ENCODE measurements at regions of chr9 and their contacts with region 1.

Region 1: DNA sequence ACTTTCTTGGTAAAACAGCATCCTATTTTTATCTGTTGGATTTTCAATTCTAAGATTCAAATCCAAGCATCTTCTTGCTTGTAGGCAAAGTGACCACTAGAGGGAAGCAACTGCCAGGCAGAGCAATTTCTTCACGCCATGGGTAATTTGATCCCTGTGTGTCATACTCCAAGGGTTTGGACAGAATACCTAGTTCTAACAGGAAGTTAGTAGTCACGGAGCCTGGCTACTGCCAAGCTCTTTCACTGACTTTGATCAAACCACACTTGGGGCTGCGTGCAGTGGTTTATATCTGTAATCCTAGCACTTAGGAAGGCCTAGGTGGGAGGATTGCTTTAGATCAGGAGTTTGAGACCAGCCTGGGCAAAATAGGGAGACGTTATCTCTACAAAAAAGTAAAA is 473.6 kb upstream of the TNC start:
- DNase-seq: peak; percentile 98
- H3K4me3 Mint-ChIP-seq: no peak overlapping the region
- H3K27ac Mint-ChIP-seq: peak overlapping the region; percentile 94
- H3K4me1 Mint-ChIP-seq: peaks cover 45% of the 10 kb centered on the region
- H3K27me3 Mint-ChIP-seq: no peaks in the 10 kb centered on the region
- CTCF ChIP-seq: peak; percentile 82

Region 2: GRCh38 chr9:115615821-115616665 is 24.5 kb after region 1 on chr9:
- CTCF ChIA-PET with region 1: interaction called, 26 read pairs
- POLR2A ChIA-PET with region 1: interaction called, 4 read pairs
- intact Hi-C with region 1: no loop called
- DNase-seq: peak; percentile 79
- H3K4me3 Mint-ChIP-seq: no peak overlapping the region
- H3K27ac Mint-ChIP-seq: peak overlapping the region; percentile 61
- H3K4me1 Mint-ChIP-seq: peaks cover 25% of the 10 kb centered on the region
- H3K27me3 Mint-ChIP-seq: no peaks in the 10 kb centered on the region
- CTCF ChIP-seq: no peak

Region 3: GRCh38 chr9:115694014-115694413 is 102.4 kb after region 1 on chr9:
- CTCF ChIA-PET with region 1: interaction called, 62 read pairs
- POLR2A ChIA-PET with region 1: interaction called, 3 read pairs
- intact Hi-C with region 1: loop called (anchors 1 kb)
- DNase-seq: peak; percentile 95
- H3K4me3 Mint-ChIP-seq: no peak overlapping the region
- H3K27ac Mint-ChIP-seq: peak overlapping the region; percentile 44
- H3K4me1 Mint-ChIP-seq: peaks cover 32% of the 10 kb centered on the region
- H3K27me3 Mint-ChIP-seq: no peaks in the 10 kb centered on the region
- CTCF ChIP-seq: peak; percentile 51

Region 4: GRCh38 chr9:115944166-115944948 is 352.8 kb after region 1 on chr9:
- CTCF ChIA-PET with region 1: interaction called, 8 read pairs
- POLR2A ChIA-PET with region 1: no interaction called
- intact Hi-C with region 1: loop called (anchors 2 kb)
- DNase-seq: peak; percentile 99
- H3K4me3 Mint-ChIP-seq: peak overlapping the region; percentile 60
- H3K27ac Mint-ChIP-seq: peak overlapping the region; percentile 100
- H3K4me1 Mint-ChIP-seq: peaks cover 71% of the 10 kb centered on the region
- H3K27me3 Mint-ChIP-seq: no peaks in the 10 kb centered on the region
- CTCF ChIP-seq: no peak

Region 5: GRCh38 chr9:116494815-116495634 is 903.4 kb after region 1 on chr9:
- CTCF ChIA-PET with region 1: interaction called, 19 read pairs
- POLR2A ChIA-PET with region 1: interaction called, 7 read pairs
- intact Hi-C with region 1: loop called (anchors 1 kb)
- DNase-seq: peak; percentile 61
- H3K4me3 Mint-ChIP-seq: no peak overlapping the region
- H3K27ac Mint-ChIP-seq: no peak overlapping the region
- H3K4me1 Mint-ChIP-seq: peaks cover 5% of the 10 kb centered on the region
- H3K27me3 Mint-ChIP-seq: no peaks in the 10 kb centered on the region
- CTCF ChIP-seq: peak; percentile 61

Region 6: GRCh38 chr9:116641292-116642059 is 1049.9 kb after region 1 on chr9:
- CTCF ChIA-PET with region 1: interaction called, 169 read pairs
- POLR2A ChIA-PET with region 1: no interaction called
- intact Hi-C with region 1: no loop called
- DNase-seq: peak; percentile 38
- H3K4me3 Mint-ChIP-seq: no peak overlapping the region
- H3K27ac Mint-ChIP-seq: no peak overlapping the region
- H3K4me1 Mint-ChIP-seq: no peaks in the 10 kb centered on the region
- H3K27me3 Mint-ChIP-seq: no peaks in the 10 kb centered on the region
- CTCF ChIP-seq: no peak

Measured in MCF 10A (cell line).